Gastrocnemius medialis (tissue), 4 donors: ENCODE measurements at regions of chr2 and their contacts with region 1.

Region 1: DNA sequence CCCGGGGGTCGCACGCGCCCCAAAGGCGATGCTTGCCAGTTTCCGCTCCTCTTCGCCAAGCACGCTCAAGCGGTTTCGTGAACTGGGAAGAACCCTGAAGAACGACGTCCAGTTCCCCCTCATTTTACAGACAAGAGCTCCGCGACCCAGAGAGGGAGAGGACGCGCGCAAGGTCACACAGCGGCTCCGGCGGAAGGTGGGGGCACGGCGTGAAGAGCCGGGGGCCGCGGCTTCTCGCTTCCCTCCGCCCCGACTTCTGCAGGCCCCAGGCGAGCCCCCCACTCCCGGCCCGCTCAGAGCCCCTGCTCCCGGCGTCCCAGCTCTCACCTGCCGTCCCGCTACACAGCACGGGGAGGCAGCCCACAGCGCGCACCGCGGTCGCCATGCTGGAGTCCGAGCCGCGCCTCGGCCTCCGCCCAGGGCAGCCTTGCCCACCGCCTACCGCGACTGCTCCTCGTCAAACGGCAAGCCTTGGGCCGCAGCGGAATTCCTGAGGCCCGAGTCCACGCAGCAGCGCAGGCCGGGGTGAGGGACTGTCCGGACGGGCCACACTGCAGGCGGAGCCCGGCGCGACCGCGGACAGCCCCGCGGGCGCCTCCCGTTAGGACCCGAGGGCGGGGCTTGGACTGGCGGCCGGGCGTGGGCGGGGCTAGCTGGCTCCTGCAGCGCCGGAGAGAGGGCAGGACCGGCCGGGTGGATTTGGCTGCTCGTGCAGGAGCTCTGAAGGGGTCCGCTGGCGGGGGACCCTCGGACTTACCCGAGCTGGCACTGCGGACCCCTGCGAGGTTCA is at the start of gene MRPS5:
- DNase-seq: peak; percentile 60 to 72
- ATAC-seq: peak; percentile 96 to 97
- H3K4me3 ChIP-seq: peak within 1 kb of the TSS; percentile 89 to 96 (median 94)
- H3K27ac ChIP-seq: peak within 1 kb of the TSS; percentile 90 to 95 (median 92)
- H3K4me1 ChIP-seq: peaks cover 24 to 27% of the 10 kb centered on the region in 2 donors
- H3K27me3 ChIP-seq: no peaks in the 10 kb centered on the region
- CTCF ChIP-seq: peak in 2 of 5 experiments; percentile 17 to 20
- POLR2A ChIP-seq: peak; percentile 64 to 77
- total RNA-seq, gene MRPS5: 53.4 to 106 (median 68.7) TPM

Region 2: DNA sequence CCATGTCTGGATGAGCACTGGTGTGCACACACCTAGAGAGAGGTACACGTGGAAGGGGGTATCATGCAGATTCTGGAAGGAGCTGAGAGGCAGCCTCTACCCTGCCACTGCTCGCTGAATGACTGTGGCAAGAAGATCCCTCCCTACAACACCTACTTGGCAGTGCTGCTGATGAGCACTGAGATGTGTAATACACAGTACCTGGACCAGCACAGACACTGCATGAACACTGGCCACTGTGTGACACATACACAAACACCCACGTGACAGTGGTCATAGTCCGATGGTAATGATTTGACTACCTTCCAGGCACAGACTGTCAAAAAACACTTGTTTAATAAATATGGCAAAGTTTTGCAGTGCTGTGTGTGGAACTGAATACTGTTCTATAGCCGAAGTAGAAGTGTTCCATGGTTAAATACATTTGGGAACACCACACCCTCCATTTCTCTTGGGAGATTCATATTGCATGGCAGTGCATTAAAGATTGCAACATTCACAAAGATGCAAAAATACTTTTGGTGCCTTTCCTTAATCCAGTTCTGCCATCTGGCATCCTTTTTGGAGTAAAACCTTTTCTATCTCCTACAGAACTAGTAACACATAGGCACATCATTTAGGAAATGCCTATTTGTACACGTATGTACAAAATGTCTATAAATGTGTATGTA is 29.6 kb before region 1 on chr2:
- in situ Hi-C with region 1: no loop called
- intact Hi-C with region 1: no loop called
- DNase-seq: no peak
- ATAC-seq: no peak
- H3K4me3 ChIP-seq: no peak overlapping the region
- H3K27ac ChIP-seq: no peak overlapping the region
- H3K4me1 ChIP-seq: no peaks in the 10 kb centered on the region
- H3K27me3 ChIP-seq: no peaks in the 10 kb centered on the region
- CTCF ChIP-seq: no peak
- POLR2A ChIP-seq: no peak

Region 3: GRCh38 chr2:95159690-95160449 is 38.3 kb after region 1 on chr2 and contains the start of gene ZNF514:
- in situ Hi-C with region 1: no loop called
- intact Hi-C with region 1: loop called (anchors 1 kb)
- DNase-seq: peak; percentile 62 to 75
- ATAC-seq: peak; percentile 84
- H3K4me3 ChIP-seq: peak within 1 kb of the TSS; percentile 74 to 90 (median 86)
- H3K27ac ChIP-seq: peak within 1 kb of the TSS; percentile 88 to 94 (median 90)
- H3K4me1 ChIP-seq: peaks cover 26 to 28% of the 10 kb centered on the region in 2 donors
- H3K27me3 ChIP-seq: no peaks in the 10 kb centered on the region
- CTCF ChIP-seq: no peak
- POLR2A ChIP-seq: peak in 1 of 2 donors; percentile 36
- total RNA-seq, gene ZNF514: 3.8 to 11.5 (median 5.9) TPM

Region 4: DNA sequence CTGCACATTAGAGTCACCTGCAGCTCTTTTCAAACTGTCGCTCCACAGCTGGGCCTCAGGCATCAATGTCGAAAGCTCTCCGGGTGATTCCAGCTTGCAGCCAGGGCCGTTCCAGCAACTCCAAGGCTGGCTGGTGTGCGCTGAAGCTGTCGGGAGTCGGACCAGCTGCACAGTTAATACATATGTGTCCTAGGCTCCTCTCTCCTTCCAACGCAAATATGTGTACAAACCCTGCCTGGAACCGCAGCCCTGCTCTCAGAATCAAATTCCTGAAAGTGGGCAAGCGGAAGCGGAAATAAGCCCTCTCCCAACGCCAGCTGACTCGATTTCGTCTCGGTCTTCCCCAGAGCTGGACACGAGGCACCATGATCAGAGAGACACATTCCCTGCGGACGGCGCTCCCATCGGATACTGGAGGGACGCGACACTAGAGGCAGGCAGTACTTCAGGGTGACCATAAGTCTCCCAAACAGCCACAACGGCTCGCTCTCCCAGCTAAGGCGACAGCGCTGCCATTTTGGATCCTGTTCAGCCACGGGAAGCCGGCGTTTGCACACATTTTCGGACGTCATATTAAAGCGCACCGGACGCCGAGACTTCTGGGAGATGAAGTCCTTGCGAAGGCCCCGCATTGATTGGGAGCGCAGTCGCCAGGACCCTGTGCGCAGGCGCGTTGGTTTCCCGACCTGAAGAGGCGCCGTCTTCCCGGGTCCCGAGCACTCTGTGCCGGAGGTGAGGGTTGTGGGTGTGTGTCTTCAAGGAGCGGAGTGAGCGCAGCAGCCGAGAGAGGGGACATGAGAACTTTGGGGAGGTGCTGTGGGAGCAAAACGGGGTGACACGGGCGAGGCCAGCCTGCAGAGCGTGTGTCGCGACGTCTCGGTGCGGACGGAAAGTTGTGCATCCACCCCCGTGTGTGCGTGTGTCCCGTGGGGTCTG is 43.8 kb after region 1 on chr2 and contains the start of gene ZNF2:
- in situ Hi-C with region 1: no loop called
- intact Hi-C with region 1: loop called (anchors 1 kb)
- DNase-seq: peak; percentile 97
- ATAC-seq: peak; percentile 99 to 100
- H3K4me3 ChIP-seq: peak within 1 kb of the TSS; percentile 65 to 96 (median 90)
- H3K27ac ChIP-seq: peak within 1 kb of the TSS; percentile 90 to 95 (median 94)
- H3K4me1 ChIP-seq: peaks cover 22 to 26% of the 10 kb centered on the region in 2 donors
- H3K27me3 ChIP-seq: no peaks in the 10 kb centered on the region
- CTCF ChIP-seq: peak in 1 of 5 experiments; percentile 17
- POLR2A ChIP-seq: peak; percentile 61 to 63
- total RNA-seq, gene ZNF2: 2.4 to 3.6 (median 2.9) TPM

Region 5: DNA sequence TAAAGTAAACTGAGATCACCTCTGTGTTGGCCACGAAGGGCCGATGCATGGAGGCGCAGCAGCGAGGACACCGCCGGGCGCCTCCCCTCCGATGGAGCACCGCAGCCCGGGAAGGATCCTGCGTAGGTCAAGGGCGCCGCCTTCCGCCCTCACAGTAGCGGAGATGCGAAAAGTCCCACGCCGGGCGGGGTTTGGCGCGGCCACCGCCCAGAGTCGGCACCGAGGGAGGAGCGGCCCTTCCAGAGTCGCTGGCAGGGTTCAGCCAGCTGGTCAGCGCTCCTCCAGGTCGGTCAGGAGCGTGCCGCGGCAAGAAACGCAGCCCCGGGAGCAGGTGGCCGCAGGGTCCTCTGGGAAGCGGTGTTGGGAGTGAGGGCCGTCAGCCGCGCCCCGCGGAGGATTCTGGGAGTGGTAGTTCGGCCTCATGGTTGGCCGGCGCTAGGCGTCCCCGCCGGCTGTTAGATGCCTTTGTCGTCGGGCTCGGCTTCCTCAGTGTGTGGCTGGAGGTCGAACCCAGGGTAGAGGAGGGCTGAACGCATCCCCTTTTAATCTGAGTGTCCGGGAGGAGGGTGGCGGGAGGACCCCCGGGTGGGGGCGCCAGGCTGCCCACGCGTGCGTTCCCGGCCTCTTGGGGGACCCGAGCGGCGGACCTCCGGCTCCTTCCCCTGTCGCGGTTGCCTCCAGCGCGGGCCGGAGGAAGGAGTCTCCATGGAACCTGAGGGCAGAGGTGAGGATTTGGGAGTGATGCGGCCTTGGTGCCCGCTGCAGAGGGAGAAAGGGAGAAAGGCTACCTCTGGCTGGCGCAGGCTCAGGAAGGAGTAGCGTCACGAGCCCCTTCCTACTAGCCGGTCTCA is 85.7 kb after region 1 on chr2 and contains the start of gene ZNF892:
- in situ Hi-C with region 1: loop called in 1 of 4 experiments (anchors 10 kb)
- intact Hi-C with region 1: loop called (anchors 1 kb)
- DNase-seq: peak; percentile 88 to 90
- ATAC-seq: peak; percentile 96 to 97
- H3K4me3 ChIP-seq: peak within 1 kb of the TSS; percentile 62 to 79 (median 70)
- H3K27ac ChIP-seq: peak within 1 kb of the TSS; percentile 81 to 88 (median 84)
- H3K4me1 ChIP-seq: peaks cover 14 to 16% of the 10 kb centered on the region in 2 donors
- H3K27me3 ChIP-seq: no peaks in the 10 kb centered on the region
- CTCF ChIP-seq: peak; percentile 10 to 56 (median 38)
- POLR2A ChIP-seq: peak; percentile 35 to 45
- total RNA-seq, gene ZNF892: 1.5 to 4.5 (median 2.1) TPM

Region 6: GRCh38 chr2:96122391-96122790 is 1000.8 kb after region 1 on chr2:
- in situ Hi-C with region 1: no loop called
- intact Hi-C with region 1: no loop called
- DNase-seq: no peak
- ATAC-seq: no peak
- H3K4me3 ChIP-seq: no peak overlapping the region
- H3K27ac ChIP-seq: no peak overlapping the region
- H3K4me1 ChIP-seq: peaks cover under 1 to 2% of the 10 kb centered on the region in 2 donors
- H3K27me3 ChIP-seq: no peaks in the 10 kb centered on the region
- CTCF ChIP-seq: no peak
- POLR2A ChIP-seq: no peak